ENCODE measurements at regions of chr3 and their contacts with region 1.

Region 1: DNA sequence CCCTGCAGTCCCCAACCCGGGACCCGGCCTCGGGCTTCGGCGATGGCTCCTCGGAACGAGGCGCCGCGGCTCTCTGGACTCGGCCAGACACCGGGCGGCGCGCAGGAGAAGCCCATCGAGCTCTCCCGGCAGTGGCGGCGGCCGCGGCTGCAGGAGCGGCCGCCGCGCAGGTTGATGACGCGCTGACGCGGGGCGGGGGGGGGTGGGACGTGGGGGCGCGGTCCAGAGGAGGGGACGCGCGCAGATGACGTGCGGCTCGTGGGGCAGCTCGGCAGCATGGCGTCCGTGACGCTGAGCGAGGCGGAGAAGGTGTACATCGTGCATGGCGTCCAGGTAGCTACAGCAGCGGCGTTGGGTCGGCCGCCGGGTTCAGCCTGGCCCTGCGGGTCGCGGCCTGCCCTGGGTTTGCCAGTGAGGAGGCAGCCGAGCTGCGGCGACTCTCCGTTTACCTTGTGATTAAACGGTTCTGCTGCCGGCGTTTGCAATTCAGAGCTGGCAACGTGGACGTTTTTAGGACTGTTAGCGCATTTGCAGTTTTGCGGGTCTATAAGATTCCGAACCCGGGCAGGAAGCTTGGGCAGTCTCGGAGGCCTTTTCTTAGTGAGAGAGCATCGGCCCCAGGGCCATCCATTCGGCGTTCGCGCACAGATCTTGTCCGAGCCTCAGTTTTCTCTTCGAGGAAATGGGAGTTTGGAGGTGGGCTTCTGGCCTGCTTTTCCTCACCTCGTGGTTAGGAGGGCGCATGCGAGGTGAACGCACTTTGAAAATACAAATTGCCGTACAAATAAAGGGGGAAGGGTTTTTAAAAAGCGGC is at the starts of genes EXOSC7 and ZDHHC3:
- DNase-seq: peak; percentile 92
- ATAC-seq: peak; percentile 89
- H3K4me3 Mint-ChIP-seq: peak within 1 kb of the TSS; percentile 92
- H3K27ac Mint-ChIP-seq: peak within 1 kb of the TSS; percentile 96
- H3K4me1 Mint-ChIP-seq: peaks cover 54% of the 10 kb centered on the region
- H3K27me3 Mint-ChIP-seq: no peaks in the 10 kb centered on the region
- total RNA-seq, gene EXOSC7: 42.7 to 70.7 TPM
- total RNA-seq, gene ZDHHC3: 31.9 to 32.9 TPM

Region 2: DNA sequence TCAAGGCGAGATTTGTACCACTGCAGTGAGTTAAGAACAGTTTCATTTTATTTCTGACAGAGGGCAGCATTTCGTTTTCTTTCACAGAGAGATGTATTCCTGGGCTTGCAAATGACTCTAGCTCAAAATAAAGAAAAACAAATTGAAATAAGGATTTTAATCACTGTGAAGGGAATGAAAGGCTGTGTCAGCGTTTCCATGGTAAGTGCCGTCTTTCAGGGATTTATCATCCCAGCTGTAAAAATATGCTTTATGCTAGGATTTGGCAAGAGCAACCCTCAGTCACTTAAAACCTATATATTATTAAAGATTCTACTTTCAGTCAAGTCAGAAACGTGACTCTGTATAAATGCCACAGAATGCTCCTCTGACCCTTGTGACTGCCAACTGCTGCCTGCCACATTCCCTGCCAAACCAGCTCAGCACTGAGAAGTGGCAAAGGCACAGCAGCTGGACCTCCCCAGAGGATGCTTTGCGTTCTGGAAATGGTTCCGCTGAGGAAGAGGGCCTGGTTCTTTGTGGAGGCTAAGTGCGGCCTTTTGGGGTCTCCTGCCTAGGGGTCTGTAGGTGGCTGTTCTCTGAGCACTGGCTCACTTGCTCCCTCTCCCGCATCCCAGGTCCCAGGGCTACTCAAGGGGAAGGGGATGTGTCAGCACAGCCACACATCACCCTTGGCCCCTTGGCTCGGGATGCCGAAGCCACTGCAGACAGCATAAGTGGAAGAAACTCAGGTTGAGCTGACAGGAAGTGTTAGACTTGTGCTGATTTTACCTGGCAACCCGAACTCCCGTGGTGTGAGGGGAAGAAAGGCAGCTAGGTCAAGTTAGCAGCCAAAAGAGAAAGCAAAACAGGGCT is 1813.8 kb before region 1 on chr3:
- CTCF ChIA-PET with region 1: no interaction called
- POLR2A ChIA-PET with region 1: no interaction called
- intact Hi-C with region 1: no loop called
- DNase-seq: peak; percentile 57
- ATAC-seq: peak; percentile 84
- H3K4me3 Mint-ChIP-seq: peak overlapping the region; percentile 61
- H3K27ac Mint-ChIP-seq: peak overlapping the region; percentile 87
- H3K4me1 Mint-ChIP-seq: peaks cover 20% of the 10 kb centered on the region
- H3K27me3 Mint-ChIP-seq: no peaks in the 10 kb centered on the region

Region 3: GRCh38 chr3:44477312-44478030 is 498.7 kb before region 1 on chr3 and contains the start of gene ZNF445:
- CTCF ChIA-PET with region 1: no interaction called
- POLR2A ChIA-PET with region 1: no interaction called
- intact Hi-C with region 1: loop called in 1 of 2 experiments (anchors 2 kb)
- DNase-seq: peak; percentile 87
- ATAC-seq: peak; percentile 89
- H3K4me3 Mint-ChIP-seq: peak within 1 kb of the TSS; percentile 75
- H3K27ac Mint-ChIP-seq: peak within 1 kb of the TSS; percentile 88
- H3K4me1 Mint-ChIP-seq: peaks cover 33% of the 10 kb centered on the region
- H3K27me3 Mint-ChIP-seq: no peaks in the 10 kb centered on the region
- total RNA-seq, gene ZNF445: 13.2 to 16.3 TPM

Region 4: DNA sequence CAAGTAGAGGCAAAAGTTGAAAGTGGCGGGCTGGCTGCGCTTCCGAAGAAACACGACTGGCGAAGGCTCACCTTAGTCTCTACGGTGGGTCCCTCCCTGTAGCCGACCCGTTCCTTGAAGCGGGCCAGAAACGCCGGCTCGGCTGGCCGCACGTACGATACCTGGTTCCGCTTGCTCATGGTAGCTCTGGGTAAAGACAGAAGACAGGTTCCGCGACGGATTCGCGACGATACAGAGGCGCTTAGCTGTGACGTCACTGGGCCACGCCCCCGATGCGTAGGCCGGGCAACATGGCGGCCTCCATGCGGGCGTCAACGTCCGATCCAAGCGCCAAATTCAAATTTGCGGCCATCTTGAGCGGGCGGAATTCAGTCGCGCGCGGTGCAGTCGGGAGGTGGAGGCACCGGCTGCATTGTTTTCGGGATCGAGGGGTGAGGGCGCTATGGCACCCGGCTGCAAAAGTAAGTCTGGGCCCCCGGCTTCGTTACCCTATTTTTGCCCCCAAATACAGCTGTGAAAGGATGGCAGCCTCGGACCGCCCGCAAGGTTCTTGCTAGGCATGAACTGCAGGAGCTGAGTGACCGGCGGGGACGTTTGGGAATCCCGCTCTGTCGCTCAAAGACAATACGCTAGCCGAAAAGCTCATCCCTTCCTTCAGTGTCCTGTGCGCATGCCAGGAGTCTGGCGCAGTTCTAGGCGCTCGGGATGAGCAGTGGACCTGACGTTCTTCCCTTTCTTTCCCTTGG is 214.6 kb before region 1 on chr3 and contains the starts of genes KIAA1143 and KIF15:
- CTCF ChIA-PET with region 1: no interaction called
- POLR2A ChIA-PET with region 1: interaction called, 6 read pairs
- intact Hi-C with region 1: loop called (anchors 1 to 5 kb)
- DNase-seq: peak; percentile 99
- ATAC-seq: peak; percentile 94
- H3K4me3 Mint-ChIP-seq: peak within 1 kb of the TSS; percentile 88
- H3K27ac Mint-ChIP-seq: peak within 1 kb of the TSS; percentile 89
- H3K4me1 Mint-ChIP-seq: peaks cover 24% of the 10 kb centered on the region
- H3K27me3 Mint-ChIP-seq: no peaks in the 10 kb centered on the region
- total RNA-seq, gene KIAA1143: 40.2 to 74.1 TPM
- total RNA-seq, gene KIF15: 40.1 to 51.7 TPM

Region 5: DNA sequence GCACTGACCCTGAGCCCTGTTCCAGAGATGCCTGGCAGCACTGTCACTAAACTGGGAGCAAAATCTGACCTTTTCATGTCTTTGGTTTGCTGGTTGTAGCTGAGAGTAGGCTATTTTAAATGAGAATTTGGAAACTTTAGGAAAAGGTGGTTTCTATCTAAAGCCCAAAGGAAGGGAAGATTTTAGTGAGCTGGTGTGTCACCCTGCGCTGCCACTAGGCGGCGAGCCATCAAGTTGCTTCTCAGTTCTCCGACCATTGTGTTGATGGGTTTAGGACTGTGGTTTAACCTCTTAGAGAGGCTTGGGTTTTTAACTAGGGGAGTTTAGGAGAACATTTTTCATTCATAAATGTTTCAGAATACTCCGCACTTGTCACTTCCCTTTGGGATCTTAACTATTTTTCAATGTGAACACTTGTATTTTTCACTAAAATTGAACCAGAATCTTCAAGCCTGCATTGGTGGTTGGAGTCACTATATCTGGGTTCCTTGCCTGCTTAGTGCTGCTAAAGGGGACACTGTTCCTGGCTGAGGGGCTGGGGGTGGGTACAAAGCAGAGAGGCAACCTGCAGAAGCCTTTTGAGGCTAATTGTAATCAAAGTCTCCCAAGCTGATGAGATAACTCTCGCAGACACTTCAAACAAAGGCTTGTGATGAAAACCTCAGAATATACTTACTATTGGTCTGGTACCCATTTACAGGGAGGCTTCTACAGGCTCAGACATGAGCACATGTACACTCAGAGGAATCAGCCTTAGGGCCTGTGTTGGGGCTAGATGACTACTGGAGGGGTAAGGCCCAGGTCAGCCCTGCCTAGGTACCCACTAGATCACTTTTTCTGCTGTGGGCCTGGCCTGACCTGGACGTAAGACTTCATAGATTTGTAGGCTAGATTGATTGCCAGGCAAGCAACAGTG is 16.6 kb after region 1 on chr3:
- CTCF ChIA-PET with region 1: interaction called, 34 read pairs
- POLR2A ChIA-PET with region 1: interaction called, 4 read pairs
- intact Hi-C with region 1: loop called in 1 of 2 experiments (anchors 1 kb)
- DNase-seq: peak; percentile 51
- ATAC-seq: no peak
- H3K4me3 Mint-ChIP-seq: no peak overlapping the region
- H3K27ac Mint-ChIP-seq: no peak overlapping the region
- H3K4me1 Mint-ChIP-seq: peaks cover 57% of the 10 kb centered on the region
- H3K27me3 Mint-ChIP-seq: no peaks in the 10 kb centered on the region

Region 6: GRCh38 chr3:45387636-45388348 is 411.6 kb after region 1 on chr3:
- CTCF ChIA-PET with region 1: no interaction called
- POLR2A ChIA-PET with region 1: no interaction called
- intact Hi-C with region 1: loop called in 1 of 2 experiments (anchors 1 kb)
- DNase-seq: no peak
- ATAC-seq: peak; percentile 8
- H3K4me3 Mint-ChIP-seq: peak overlapping the region; percentile 85
- H3K27ac Mint-ChIP-seq: peak overlapping the region; percentile 51
- H3K4me1 Mint-ChIP-seq: peaks cover 13% of the 10 kb centered on the region
- H3K27me3 Mint-ChIP-seq: peaks cover 1% of the 10 kb centered on the region